ENCODE measurements at regions of chr6 and their contacts with region 1.

Region 1: DNA sequence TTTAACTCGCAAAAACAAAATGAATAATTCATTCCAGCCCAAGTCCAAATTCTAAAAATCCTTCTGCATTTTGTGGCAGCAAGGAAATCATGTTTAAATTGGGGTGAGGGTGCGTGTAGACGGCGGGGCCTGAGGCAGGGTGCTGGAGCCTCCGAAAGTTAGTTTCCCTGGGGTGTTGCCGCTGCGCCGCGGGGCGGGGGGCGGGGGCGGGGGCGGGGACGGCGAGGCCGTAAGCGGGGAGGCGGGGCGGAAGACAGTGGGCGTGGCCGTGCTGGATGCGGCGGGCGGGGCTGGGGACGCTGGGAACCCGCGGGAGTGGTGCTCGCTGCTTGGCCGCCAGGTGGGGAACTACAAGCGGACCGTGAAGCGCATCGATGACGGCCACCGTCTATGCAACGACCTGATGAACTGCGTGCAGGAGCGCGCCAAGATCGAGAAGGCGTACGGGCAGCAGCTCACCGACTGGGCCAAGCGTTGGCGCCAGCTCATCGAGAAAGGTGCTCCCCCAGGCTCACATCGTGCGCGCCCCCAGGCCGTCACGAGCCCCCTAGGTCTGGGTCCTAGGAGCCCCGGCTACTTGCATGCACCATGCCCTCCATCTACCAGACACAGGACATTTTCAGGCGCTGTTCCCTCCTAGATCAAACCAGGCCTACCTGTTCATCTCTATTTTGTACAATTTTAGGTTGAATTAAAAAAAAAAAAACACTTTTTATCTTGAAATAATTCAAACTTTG is 29.0 kb downstream of the SPDEF start:
- H3K4me3 ChIP-seq: peak overlapping the region; percentile 16; the same call in 1 of the 2 replicates
- H3K27ac ChIP-seq: no peak overlapping the region
- H3K4me1 ChIP-seq: no peaks in the 10 kb centered on the region
- CTCF ChIP-seq: peak; percentile 93

Region 2: GRCh38 chr6:33788694-33789549 is 738.2 kb before region 1 on chr6 and contains the start of gene LEMD2:
- CTCF ChIA-PET with region 1: no interaction called
- POLR2A ChIA-PET with region 1: no interaction called
- H3K4me3 ChIP-seq: peak within 1 kb of the TSS; percentile 67
- H3K27ac ChIP-seq: peak within 1 kb of the TSS; percentile 93
- H3K4me1 ChIP-seq: peaks cover 9% of the 10 kb centered on the region
- CTCF ChIP-seq: no peak

Region 3: GRCh38 chr6:34459899-34460593 is 67.1 kb before region 1 on chr6:
- CTCF ChIA-PET with region 1: interaction called, 15 read pairs
- POLR2A ChIA-PET with region 1: no interaction called
- H3K4me3 ChIP-seq: no peak overlapping the region
- H3K27ac ChIP-seq: no peak overlapping the region
- H3K4me1 ChIP-seq: no peaks in the 10 kb centered on the region
- CTCF ChIP-seq: peak; percentile 57